Activated naive CD4-positive, alpha-beta T cell treated with anti-CD3 and anti-CD28 coated beads, Interleukin-2, amount 10 ng/mL, durations not matched to agents 7 days and 5 days (primary cell): ENCODE measurements at regions of chr3 and their contacts with region 1.

Region 1: DNA sequence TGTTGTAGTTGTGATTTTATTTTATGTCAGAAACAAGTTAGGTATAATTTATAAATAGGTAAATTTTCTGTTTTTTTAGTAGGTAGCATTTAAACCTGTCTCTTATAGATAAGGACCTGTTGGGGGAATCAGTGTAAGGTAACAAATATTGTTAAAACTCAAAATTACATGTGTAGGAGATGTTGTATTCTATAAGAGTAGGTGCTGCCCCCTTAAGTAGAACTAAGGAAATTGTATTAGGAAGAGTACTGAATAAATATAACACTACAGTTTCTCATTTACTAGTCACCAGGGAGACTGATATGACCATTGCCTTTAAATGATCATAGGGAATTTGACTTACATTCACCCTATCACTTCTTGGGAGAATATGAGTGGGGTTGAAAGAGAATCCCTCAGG is 31.2 kb downstream of the SLC25A36 start:
- DNase-seq: no peak
- H3K4me3 Mint-ChIP-seq: no peak overlapping the region
- H3K27ac Mint-ChIP-seq: no peak overlapping the region
- H3K4me1 Mint-ChIP-seq: peaks cover 11% of the 10 kb centered on the region
- H3K27me3 Mint-ChIP-seq: no peaks in the 10 kb centered on the region

Region 2: GRCh38 chr3:140467104-140467577 is 505.7 kb before region 1 on chr3:
- CTCF ChIA-PET with region 1: no interaction called
- DNase-seq: no peak
- H3K4me3 Mint-ChIP-seq: no peak overlapping the region
- H3K27ac Mint-ChIP-seq: no peak overlapping the region
- H3K4me1 Mint-ChIP-seq: no peaks in the 10 kb centered on the region
- H3K27me3 Mint-ChIP-seq: peaks cover 6% of the 10 kb centered on the region

Region 3: GRCh38 chr3:140898340-140899180 is 74.3 kb before region 1 on chr3:
- CTCF ChIA-PET with region 1: interaction called, 10 read pairs
- DNase-seq: peak; percentile 27
- H3K4me3 Mint-ChIP-seq: no peak overlapping the region
- H3K27ac Mint-ChIP-seq: no peak overlapping the region
- H3K4me1 Mint-ChIP-seq: no peaks in the 10 kb centered on the region
- H3K27me3 Mint-ChIP-seq: peaks cover 10% of the 10 kb centered on the region

Region 4: GRCh38 chr3:141302364-141303141 is 329.7 kb after region 1 on chr3:
- CTCF ChIA-PET with region 1: no interaction called
- DNase-seq: no peak
- H3K4me3 Mint-ChIP-seq: no peak overlapping the region
- H3K27ac Mint-ChIP-seq: no peak overlapping the region
- H3K4me1 Mint-ChIP-seq: peaks cover 47% of the 10 kb centered on the region
- H3K27me3 Mint-ChIP-seq: peaks cover 3% of the 10 kb centered on the region